Calu3 (cell line): ENCODE measurements at regions of chr6 and their contacts with region 1.

Region 1: GRCh38 chr6:139588076-139588639 is 213.7 kb upstream of the CITED2 start:
- DNase-seq: peak; percentile 66
- H3K4me3 Mint-ChIP-seq: peak overlapping the region; percentile 59
- H3K27ac Mint-ChIP-seq: peak overlapping the region; percentile 91
- H3K4me1 Mint-ChIP-seq: peaks cover 56% of the 10 kb centered on the region
- H3K27me3 Mint-ChIP-seq: no peaks in the 10 kb centered on the region
- CTCF ChIP-seq: no peak

Region 2: GRCh38 chr6:139515511-139515910 is 72.6 kb before region 1 on chr6:
- CTCF ChIA-PET with region 1: no interaction called
- intact Hi-C with region 1: no loop called
- DNase-seq: no peak
- H3K4me3 Mint-ChIP-seq: no peak overlapping the region
- H3K27ac Mint-ChIP-seq: no peak overlapping the region
- H3K4me1 Mint-ChIP-seq: no peaks in the 10 kb centered on the region
- H3K27me3 Mint-ChIP-seq: no peaks in the 10 kb centered on the region
- CTCF ChIP-seq: no peak

Region 3: GRCh38 chr6:139533573-139534471 is 54.3 kb before region 1 on chr6:
- CTCF ChIA-PET with region 1: no interaction called
- intact Hi-C with region 1: loop called (anchors 5 kb)
- DNase-seq: no peak
- H3K4me3 Mint-ChIP-seq: peak overlapping the region; percentile 39
- H3K27ac Mint-ChIP-seq: peak overlapping the region; percentile 25
- H3K4me1 Mint-ChIP-seq: peaks cover 20% of the 10 kb centered on the region
- H3K27me3 Mint-ChIP-seq: no peaks in the 10 kb centered on the region
- CTCF ChIP-seq: no peak

Region 4: GRCh38 chr6:139625998-139626975 is 38.1 kb after region 1 on chr6:
- CTCF ChIA-PET with region 1: no interaction called
- intact Hi-C with region 1: no loop called
- DNase-seq: no peak
- H3K4me3 Mint-ChIP-seq: no peak overlapping the region
- H3K27ac Mint-ChIP-seq: no peak overlapping the region
- H3K4me1 Mint-ChIP-seq: no peaks in the 10 kb centered on the region
- H3K27me3 Mint-ChIP-seq: no peaks in the 10 kb centered on the region
- CTCF ChIP-seq: no peak

Region 5: GRCh38 chr6:139764498-139764986 is 176.4 kb after region 1 on chr6:
- CTCF ChIA-PET with region 1: no interaction called
- intact Hi-C with region 1: loop called (anchors 10 kb)
- DNase-seq: peak; percentile 3
- H3K4me3 Mint-ChIP-seq: no peak overlapping the region
- H3K27ac Mint-ChIP-seq: no peak overlapping the region
- H3K4me1 Mint-ChIP-seq: peaks cover 24% of the 10 kb centered on the region
- H3K27me3 Mint-ChIP-seq: no peaks in the 10 kb centered on the region
- CTCF ChIP-seq: no peak

Region 6: DNA sequence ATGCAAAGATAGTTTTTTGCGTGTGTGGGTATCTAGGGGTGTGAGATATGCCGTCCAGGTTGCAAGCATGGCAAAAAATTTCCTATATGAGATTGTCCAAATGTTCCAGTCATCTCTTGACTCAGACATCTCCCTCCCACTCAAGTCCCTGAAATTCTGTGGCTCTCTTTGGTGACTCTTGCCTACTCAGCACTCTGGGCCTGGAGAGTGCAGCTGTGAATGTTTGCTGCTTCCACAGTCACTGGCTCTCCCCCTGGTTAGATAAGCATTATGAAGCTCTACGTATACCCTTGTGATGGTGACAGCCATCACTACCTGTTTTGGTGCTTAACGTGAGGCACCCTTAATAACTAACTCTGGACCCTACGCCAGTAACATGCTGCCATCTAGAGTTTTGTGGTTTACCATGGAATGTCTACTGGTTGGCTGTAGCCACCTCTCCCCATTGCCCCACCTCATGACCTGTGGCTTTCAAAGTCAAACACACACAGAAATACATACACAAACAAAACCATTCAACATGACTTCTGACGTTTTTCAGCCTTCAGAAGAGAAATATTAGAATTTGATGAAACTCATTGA is 408.2 kb after region 1 on chr6:
- CTCF ChIA-PET with region 1: no interaction called
- intact Hi-C with region 1: loop called (anchors 5 kb)
- DNase-seq: peak; percentile 43
- H3K4me3 Mint-ChIP-seq: no peak overlapping the region
- H3K27ac Mint-ChIP-seq: no peak overlapping the region
- H3K4me1 Mint-ChIP-seq: peaks cover 10% of the 10 kb centered on the region
- H3K27me3 Mint-ChIP-seq: no peaks in the 10 kb centered on the region
- CTCF ChIP-seq: no peak